A549 (cell line): ENCODE measurements at regions of chr3 and their contacts with region 1.

Region 1: DNA sequence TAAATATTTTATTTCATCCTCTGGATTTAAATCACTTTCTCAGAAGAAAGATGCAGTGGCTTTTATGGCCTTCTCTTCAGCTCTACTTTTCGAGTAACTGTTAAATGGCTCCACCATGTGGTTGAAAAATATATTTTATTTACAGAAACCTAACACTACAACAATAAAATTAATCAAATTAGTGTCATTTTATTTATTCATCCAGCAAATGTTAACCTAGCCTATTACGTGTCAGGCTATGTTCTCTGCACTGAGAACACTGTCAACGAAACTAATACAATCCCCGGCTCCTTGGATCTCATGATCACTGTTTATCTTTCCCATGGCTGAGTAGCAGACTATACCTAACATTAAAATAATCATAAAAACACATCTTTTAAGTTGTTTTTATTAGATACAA is 148.0 kb upstream of the OSTN start:
- DNase-seq: peak in 1 of 2 experiments; percentile 7
- ATAC-seq: peak in 1 of 2 experiments; percentile 47; a peak in 2 of 6 replicates
- H3K4me3 ChIP-seq: no peak overlapping the region
- H3K27ac ChIP-seq: no peak overlapping the region
- H3K4me1 ChIP-seq: no peaks in the 10 kb centered on the region
- CTCF ChIP-seq: peak; percentile 61
- EP300 ChIP-seq: no peak
- POLR2A ChIP-seq: no peak
- RAD21 ChIP-seq: peak; percentile 61 to 73

Region 2: GRCh38 chr3:190701096-190701532 is 349.9 kb before region 1 on chr3:
- CTCF ChIA-PET with region 1: interaction called, 30 read pairs
- POLR2A ChIA-PET with region 1: no interaction called
- DNase-seq: peak; percentile 13 to 79
- ATAC-seq: peak; percentile 96 to 97
- H3K4me3 ChIP-seq: no peak overlapping the region
- H3K27ac ChIP-seq: no peak overlapping the region
- H3K4me1 ChIP-seq: peaks cover 24% of the 10 kb centered on the region
- CTCF ChIP-seq: peak; percentile 79
- EP300 ChIP-seq: no peak
- POLR2A ChIP-seq: no peak
- RAD21 ChIP-seq: peak; percentile 79 to 83

Region 3: GRCh38 chr3:190811775-190812480 is 239.1 kb before region 1 on chr3:
- CTCF ChIA-PET with region 1: interaction called, 12 read pairs
- POLR2A ChIA-PET with region 1: no interaction called
- DNase-seq: peak; percentile 6 to 61
- ATAC-seq: peak; percentile 71 to 94; a peak in 5 of 6 replicates
- H3K4me3 ChIP-seq: peak overlapping the region; percentile 43
- H3K27ac ChIP-seq: no peak overlapping the region
- H3K4me1 ChIP-seq: no peaks in the 10 kb centered on the region
- CTCF ChIP-seq: peak; percentile 63
- EP300 ChIP-seq: no peak
- POLR2A ChIP-seq: no peak
- RAD21 ChIP-seq: peak; percentile 62 to 67

Region 4: DNA sequence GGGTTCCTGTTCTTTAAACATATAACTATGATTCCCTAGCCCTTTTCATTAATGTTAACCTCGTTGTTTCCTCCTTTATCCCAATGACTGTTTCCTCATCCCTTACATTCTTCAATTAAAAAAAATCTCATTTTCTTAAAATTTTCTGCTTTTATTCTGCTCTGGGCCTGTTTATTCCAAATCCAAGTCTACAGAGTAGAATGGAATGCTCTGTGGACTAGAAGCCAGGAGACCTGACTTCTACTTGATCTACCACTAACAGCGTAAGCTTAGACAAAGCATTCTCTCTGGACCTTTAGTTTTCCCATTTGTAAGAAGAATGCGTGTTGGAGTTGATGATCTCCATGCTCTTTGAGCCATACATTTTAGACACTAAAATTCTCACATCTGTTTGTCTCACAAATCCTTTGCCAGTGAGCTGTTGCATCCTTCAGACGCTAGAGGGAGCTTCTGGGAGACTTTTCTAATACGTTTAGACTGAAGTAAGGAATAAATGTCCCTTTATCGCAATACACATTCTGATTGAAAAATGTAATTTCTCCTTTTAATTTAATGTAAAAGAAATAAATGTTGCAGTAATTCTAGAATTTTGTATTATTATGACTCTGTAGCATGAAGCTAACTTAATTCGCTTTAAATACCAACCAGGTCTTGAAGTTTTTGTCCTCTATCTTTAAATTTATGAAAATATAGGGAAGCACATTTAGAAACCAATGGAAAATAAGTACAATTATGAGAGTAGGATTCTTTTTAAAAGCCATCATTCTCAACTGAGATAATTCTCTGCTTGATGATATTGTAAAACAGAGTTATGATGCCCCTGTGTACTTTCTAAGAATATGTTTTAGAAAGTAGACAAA is 166.8 kb before region 1 on chr3:
- CTCF ChIA-PET with region 1: interaction called, 33 read pairs
- POLR2A ChIA-PET with region 1: no interaction called
- DNase-seq: peak in 1 of 2 experiments; percentile 54
- ATAC-seq: peak; percentile 56 to 72; a peak in 3 of 6 replicates
- H3K4me3 ChIP-seq: no peak overlapping the region
- H3K27ac ChIP-seq: no peak overlapping the region
- H3K4me1 ChIP-seq: no peaks in the 10 kb centered on the region
- CTCF ChIP-seq: peak; percentile 75
- EP300 ChIP-seq: no peak
- POLR2A ChIP-seq: no peak
- RAD21 ChIP-seq: peak; percentile 45 to 53; a peak in 4 of 5 replicates